Activated CD8-positive, alpha-beta T cell treated with anti-CD3 and anti-CD28 coated beads for 36 hours (primary cell): ENCODE measurements at regions of chr18 and their contacts with region 1.

Region 1: GRCh38 chr18:54269893-54270844 is 852 bp downstream of the POLI start:
- DNase-seq: peak; percentile 82
- ATAC-seq: peak; percentile 62
- H3K4me3 Mint-ChIP-seq: peak overlapping the region; percentile 85
- H3K27ac Mint-ChIP-seq: peak overlapping the region; percentile 97
- H3K4me1 Mint-ChIP-seq: peaks cover 16% of the 10 kb centered on the region
- H3K27me3 Mint-ChIP-seq: no peaks in the 10 kb centered on the region
- CTCF ChIP-seq: peak; percentile 78

Region 2: GRCh38 chr18:54119524-54120019 is 150.6 kb before region 1 on chr18:
- CTCF ChIA-PET with region 1: interaction called, 12 read pairs
- POLR2A ChIA-PET with region 1: no interaction called
- intact Hi-C with region 1: no loop called
- DNase-seq: peak; percentile 27
- ATAC-seq: peak; percentile 78
- H3K4me3 Mint-ChIP-seq: peak overlapping the region; percentile 50
- H3K27ac Mint-ChIP-seq: peak overlapping the region; percentile 41
- H3K4me1 Mint-ChIP-seq: peaks cover 3% of the 10 kb centered on the region
- H3K27me3 Mint-ChIP-seq: peaks cover 12% of the 10 kb centered on the region
- CTCF ChIP-seq: peak; percentile 86

Region 3: DNA sequence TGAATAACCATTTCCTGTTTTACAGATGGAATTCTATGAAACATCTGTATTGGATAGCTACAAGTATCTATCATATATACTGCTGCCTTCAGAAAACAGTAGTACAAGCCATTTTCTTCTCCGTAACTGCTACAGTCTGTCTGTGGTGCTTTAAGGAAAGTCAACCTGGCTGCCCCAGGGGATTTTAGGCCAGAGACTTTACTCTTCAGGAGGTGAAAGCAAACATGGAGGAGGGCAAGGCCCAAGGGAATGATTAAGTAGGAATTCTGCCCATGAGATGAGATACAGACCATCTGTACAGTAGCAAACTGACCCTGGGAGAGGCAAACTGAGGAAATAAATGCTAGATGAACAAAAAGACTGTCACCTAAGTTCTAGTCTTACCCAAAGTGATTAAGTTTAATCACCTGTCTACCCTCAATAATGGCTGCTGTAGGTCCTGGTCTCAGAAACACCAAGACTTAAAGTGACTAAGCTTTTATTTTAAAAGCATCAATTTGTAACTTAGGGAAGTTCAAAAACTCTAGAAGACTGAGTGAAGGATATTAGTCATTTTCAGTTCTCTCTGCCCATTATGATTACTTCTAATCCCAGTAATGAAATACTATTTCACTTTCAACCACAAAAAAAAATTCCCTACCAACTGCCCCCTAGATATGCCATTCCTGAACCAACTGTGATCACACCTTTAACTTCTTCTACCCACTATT is 60.5 kb before region 1 on chr18:
- CTCF ChIA-PET with region 1: interaction called, 15 read pairs
- POLR2A ChIA-PET with region 1: no interaction called
- intact Hi-C with region 1: no loop called
- DNase-seq: no peak
- ATAC-seq: peak; percentile 87
- H3K4me3 Mint-ChIP-seq: peak overlapping the region; percentile 34
- H3K27ac Mint-ChIP-seq: peak overlapping the region; percentile 81
- H3K4me1 Mint-ChIP-seq: peaks cover 56% of the 10 kb centered on the region
- H3K27me3 Mint-ChIP-seq: no peaks in the 10 kb centered on the region
- CTCF ChIP-seq: no peak

Region 4: DNA sequence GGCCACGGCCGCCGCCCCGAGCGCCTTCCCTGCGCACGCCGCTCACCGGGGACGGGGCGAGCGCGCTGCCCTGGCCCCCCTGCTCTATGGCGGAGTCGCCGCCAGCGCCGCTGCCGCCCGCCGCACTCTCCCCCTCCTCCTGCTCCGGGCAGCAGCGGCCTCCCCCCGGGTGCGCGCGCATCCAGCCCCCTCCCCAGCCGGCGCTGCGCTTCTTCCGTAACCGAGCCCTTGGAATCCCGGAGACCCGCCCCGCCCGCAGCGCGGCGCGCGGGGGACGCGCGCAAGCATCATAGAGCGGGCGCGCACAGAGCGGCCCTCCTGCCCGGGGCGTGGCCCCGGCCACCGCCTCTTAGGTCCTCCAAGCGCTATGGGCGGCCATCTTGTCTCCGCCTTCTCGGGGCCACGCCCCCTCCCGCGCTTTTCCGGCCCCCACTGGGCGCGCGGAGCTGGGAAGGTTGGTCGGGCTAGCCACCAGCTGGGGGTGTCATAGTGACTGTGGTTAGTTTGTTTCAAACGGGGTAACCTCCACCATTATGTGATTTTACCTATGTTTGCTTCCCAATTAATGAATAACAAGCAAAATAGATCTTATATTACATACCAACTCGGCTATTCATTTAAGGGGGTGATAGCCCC is 45.7 kb before region 1 on chr18 and contains the start of gene MBD2:
- CTCF ChIA-PET with region 1: interaction called, 53 read pairs
- POLR2A ChIA-PET with region 1: interaction called, 19 read pairs
- intact Hi-C with region 1: no loop called
- DNase-seq: peak; percentile 96
- ATAC-seq: peak; percentile 93
- H3K4me3 Mint-ChIP-seq: peak within 1 kb of the TSS; percentile 89
- H3K27ac Mint-ChIP-seq: peak within 1 kb of the TSS; percentile 93
- H3K4me1 Mint-ChIP-seq: peaks cover 46% of the 10 kb centered on the region
- H3K27me3 Mint-ChIP-seq: no peaks in the 10 kb centered on the region
- CTCF ChIP-seq: no peak
- total RNA-seq, gene MBD2: 101 to 102 TPM

Region 5: DNA sequence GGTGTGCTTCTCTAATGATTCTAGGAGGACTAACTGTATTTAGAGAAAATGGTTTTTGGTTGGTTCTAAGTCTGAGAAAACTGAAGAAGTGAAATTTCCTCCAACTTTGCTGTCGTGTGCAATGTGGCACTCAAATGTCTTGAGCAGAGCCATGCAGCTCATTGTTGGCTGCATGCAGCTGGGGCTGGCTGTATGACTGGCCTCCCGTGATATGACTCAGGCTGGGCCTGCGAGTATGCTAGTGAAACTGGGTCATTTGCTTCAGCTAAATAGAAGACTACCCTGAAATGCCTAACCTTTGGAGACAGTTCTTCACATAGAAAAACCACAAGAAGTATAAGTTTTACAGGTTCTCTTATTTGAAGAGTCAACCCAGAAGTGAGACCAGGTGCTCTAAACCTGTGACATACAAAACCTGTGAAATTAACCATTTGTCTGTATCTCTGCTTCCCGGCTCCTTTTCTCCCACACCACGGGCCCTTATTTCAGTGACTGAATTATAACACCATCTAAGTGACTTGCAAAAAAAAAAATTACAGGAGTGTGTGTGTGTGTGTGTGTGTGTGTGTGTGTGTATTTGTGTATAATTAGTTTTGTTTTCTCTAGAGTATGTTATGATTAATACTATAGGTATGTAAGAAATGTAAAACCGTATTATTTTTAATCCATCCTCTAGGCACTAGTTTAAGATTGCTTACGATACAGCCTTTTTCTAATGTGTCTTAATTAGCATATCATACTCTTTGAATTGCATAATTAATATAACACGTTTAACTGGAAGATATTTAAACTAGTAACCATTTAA is 15.0 kb after region 1 on chr18:
- CTCF ChIA-PET with region 1: interaction called, 23 read pairs
- POLR2A ChIA-PET with region 1: interaction called, 6 read pairs
- intact Hi-C with region 1: no loop called
- DNase-seq: peak; percentile 92
- ATAC-seq: peak; percentile 97
- H3K4me3 Mint-ChIP-seq: peak overlapping the region; percentile 18
- H3K27ac Mint-ChIP-seq: peak overlapping the region; percentile 86
- H3K4me1 Mint-ChIP-seq: peaks cover 28% of the 10 kb centered on the region
- H3K27me3 Mint-ChIP-seq: no peaks in the 10 kb centered on the region
- CTCF ChIP-seq: no peak

Region 6: GRCh38 chr18:54357660-54358494 is 87.7 kb after region 1 on chr18 and contains the starts of genes C18orf54 and STARD6:
- CTCF ChIA-PET with region 1: interaction called, 20 read pairs
- POLR2A ChIA-PET with region 1: interaction called, 3 read pairs
- intact Hi-C with region 1: no loop called
- DNase-seq: peak; percentile 89
- ATAC-seq: peak; percentile 97
- H3K4me3 Mint-ChIP-seq: peak within 1 kb of the TSS; percentile 98
- H3K27ac Mint-ChIP-seq: peak within 1 kb of the TSS; percentile 95
- H3K4me1 Mint-ChIP-seq: peaks cover 9% of the 10 kb centered on the region
- H3K27me3 Mint-ChIP-seq: peaks cover 3% of the 10 kb centered on the region
- CTCF ChIP-seq: peak; percentile 55
- total RNA-seq, gene C18orf54: 7.3 to 7.6 TPM
- total RNA-seq, gene STARD6: not detected